Heart left ventricle (tissue), 16 donors: ENCODE measurements at regions of chr6 and their contacts with region 1.

Region 1: DNA sequence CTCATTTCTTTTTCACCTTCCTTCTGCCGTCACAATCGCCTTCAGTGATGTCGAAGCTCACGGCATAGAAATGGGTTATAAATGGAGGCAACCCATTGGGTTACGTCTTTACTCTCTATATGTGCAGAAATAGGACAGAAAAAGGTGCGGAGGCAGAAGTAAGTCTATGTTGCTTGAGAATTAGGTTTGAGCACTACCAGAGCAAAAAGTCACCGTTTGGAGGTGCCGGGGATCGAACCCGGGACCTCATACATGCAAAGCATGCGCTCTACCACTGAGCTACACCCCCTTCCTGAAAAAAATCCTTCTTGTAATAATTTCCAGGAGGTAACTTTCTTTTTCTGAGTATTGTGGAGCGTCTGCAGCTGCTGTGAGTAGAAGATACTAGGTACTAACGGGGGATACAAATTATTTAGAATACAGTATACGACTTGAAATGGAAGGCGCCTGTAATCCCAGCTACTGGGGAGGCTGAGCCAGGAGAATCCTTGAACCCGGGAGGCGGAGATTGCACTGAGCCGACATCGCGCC is 134.2 kb downstream of the TRIM27 start:
- DNase-seq: no peak
- ATAC-seq: no peak
- H3K4me3 ChIP-seq: peak overlapping the region in 5 of 12 donors; percentile 0 to 33 (median 19)
- H3K27ac ChIP-seq: no peak overlapping the region
- H3K4me1 ChIP-seq: peaks cover 0 to 9% (median 0%) of the 10 kb centered on the region in 12 donors
- H3K27me3 ChIP-seq: peaks cover 44 to 100% (median 92%) of the 10 kb centered on the region in 9 donors
- CTCF ChIP-seq: no peak
- POLR2A ChIP-seq: no peak

Region 2: DNA sequence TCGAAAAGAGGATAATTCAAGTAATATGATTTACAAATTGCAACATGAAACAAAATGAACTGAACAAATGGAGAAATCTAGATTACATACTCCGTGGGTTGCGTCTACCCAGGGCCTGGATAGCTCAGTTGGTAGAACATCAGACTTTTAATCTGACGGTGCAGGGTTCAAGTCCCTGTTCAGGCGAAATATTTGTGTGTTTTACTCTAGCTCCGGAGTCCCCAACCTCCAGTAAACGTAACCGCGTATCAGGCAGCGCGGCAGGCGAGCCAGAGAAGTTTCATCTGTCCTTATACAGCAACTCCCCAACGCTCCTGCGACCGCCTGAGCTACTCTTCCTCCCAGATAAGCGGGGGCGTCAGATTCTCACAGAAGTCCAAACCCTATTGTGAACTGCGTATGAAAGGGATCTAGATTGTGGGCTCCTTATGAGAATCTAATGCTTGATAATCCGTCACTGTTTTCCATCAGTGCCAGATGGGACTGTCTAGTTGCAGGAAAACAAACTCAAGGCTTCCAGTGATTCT is 41.9 kb before region 1 on chr6:
- intact Hi-C with region 1: loop called in 1 of 10 experiments (anchors 10 kb)
- DNase-seq: no peak
- ATAC-seq: no peak
- H3K4me3 ChIP-seq: no peak overlapping the region
- H3K27ac ChIP-seq: no peak overlapping the region
- H3K4me1 ChIP-seq: no peaks in the 10 kb centered on the region
- H3K27me3 ChIP-seq: peaks cover 0 to 83% (median 32%) of the 10 kb centered on the region in 9 donors
- CTCF ChIP-seq: no peak
- POLR2A ChIP-seq: no peak

Region 3: GRCh38 chr6:28895134-28895812 is 105.7 kb after region 1 on chr6:
- intact Hi-C with region 1: no loop called
- DNase-seq: peak; percentile 92 to 94 (median 92)
- ATAC-seq: peak; percentile 88 to 91 (median 90)
- H3K4me3 ChIP-seq: peak overlapping the region; percentile 51 to 87 (median 73)
- H3K27ac ChIP-seq: peak overlapping the region; percentile 80 to 99 (median 96)
- H3K4me1 ChIP-seq: peaks cover 0 to 18% (median 7%) of the 10 kb centered on the region in 12 donors
- H3K27me3 ChIP-seq: no peaks in the 10 kb centered on the region
- CTCF ChIP-seq: no peak
- POLR2A ChIP-seq: peak in 1 of 2 donors; percentile 81